ENCODE measurements at regions of chrX and their contacts with region 1.

Region 1: DNA sequence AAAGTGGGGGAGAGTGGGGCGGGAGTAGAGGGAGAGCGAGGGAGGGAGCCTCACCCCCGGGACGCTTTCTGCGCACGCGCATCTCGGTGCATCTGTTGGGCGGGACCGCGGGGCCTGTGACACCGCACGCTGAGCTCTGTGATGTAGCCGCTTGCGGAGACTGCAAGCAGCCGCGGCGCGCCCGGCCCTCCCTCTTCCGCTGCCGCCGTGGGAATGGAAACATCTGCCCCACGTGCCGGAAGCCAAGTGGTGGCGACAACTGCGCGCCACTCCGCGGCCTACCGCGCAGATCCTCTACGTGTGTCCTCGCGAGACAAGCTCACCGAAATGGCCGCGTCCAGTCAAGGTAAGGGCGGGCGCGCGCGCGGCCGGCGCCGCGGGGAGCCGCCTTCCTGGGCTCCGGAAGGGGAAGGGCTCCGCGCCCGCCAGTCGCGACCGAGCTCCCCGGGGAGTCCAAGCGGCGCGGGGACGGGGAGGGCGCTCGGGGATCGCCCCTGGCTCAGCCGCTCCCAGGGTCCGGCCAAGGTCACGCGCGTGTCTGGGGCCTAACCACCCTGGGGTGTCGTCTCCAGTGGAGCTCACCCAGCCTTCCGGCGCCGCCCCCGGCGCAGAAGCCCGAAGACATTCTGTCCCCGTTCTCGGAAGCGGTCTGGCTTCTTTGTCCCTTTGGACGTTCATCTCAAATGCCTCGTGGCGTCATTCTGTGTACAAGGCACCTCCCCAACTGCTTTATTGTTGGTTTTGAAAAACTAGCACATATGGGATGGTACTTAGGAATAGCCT is at the start of gene FUNDC2:
- DNase-seq: peak; percentile 93
- H3K4me3 Mint-ChIP-seq: peak within 1 kb of the TSS; percentile 85
- H3K27ac Mint-ChIP-seq: peak within 1 kb of the TSS; percentile 91
- H3K4me1 Mint-ChIP-seq: peaks cover 19% of the 10 kb centered on the region
- H3K27me3 Mint-ChIP-seq: peaks cover 7% of the 10 kb centered on the region
- total RNA-seq, gene FUNDC2: 70.1 and 70.7 TPM in 2 replicates

Region 2: DNA sequence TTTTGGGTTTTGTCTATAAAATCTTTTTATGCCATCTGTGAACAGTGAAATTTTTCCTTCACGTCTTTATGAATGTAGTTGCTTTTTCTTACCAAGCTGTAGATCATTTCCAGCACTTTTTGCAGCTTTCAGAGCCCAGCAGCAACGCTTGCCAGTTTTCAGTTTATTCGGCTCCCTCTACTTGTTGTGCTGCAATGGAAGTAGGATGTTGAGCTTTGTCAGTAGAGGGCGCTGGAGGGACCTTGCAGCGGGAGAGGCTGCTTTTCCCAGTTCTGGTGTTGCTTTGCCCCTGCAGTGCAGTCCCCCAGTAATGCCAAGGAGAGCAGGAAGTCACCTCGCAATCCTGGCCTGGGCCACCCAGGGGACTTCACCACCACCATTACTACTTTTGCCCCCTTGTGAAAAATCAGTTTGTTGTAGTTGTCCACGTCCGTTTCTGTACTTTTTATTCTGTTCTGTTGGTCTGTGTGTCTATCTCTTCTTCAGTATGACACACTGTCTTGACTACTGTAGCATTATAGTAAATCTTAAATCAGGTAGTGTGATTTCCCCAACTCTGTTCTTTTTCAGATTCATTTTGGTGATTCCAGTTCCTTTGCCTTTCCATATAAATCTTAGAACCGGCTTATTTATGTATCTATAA is 22.2 kb after region 1 on chrX:
- intact Hi-C with region 1: loop called (anchors 2 kb)
- DNase-seq: no peak
- H3K4me3 Mint-ChIP-seq: no peak overlapping the region
- H3K27ac Mint-ChIP-seq: no peak overlapping the region
- H3K4me1 Mint-ChIP-seq: peaks cover 21% of the 10 kb centered on the region
- H3K27me3 Mint-ChIP-seq: no peaks in the 10 kb centered on the region

Region 3: GRCh38 chrX:155056877-155057792 is 30.2 kb after region 1 on chrX:
- intact Hi-C with region 1: loop called (anchors 2 kb)
- DNase-seq: peak; percentile 32
- H3K4me3 Mint-ChIP-seq: peak overlapping the region; percentile 31
- H3K27ac Mint-ChIP-seq: peak overlapping the region; percentile 42
- H3K4me1 Mint-ChIP-seq: peaks cover 25% of the 10 kb centered on the region
- H3K27me3 Mint-ChIP-seq: no peaks in the 10 kb centered on the region

Region 4: GRCh38 chrX:155070975-155071693 is 44.2 kb after region 1 on chrX and contains the starts of genes BRCC3, CMC4 and MTCP1:
- intact Hi-C with region 1: loop called (anchors 1 kb)
- DNase-seq: peak; percentile 74
- H3K4me3 Mint-ChIP-seq: peak within 1 kb of the TSS; percentile 94
- H3K27ac Mint-ChIP-seq: peak within 1 kb of the TSS; percentile 95
- H3K4me1 Mint-ChIP-seq: peaks cover 44% of the 10 kb centered on the region
- H3K27me3 Mint-ChIP-seq: no peaks in the 10 kb centered on the region
- total RNA-seq, gene BRCC3: 29.3 and 34.9 TPM in 2 replicates
- total RNA-seq, gene CMC4: 1.9 and 4.3 TPM in 2 replicates
- total RNA-seq, gene MTCP1: 12.3 and 19.0 TPM in 2 replicates

Region 5: DNA sequence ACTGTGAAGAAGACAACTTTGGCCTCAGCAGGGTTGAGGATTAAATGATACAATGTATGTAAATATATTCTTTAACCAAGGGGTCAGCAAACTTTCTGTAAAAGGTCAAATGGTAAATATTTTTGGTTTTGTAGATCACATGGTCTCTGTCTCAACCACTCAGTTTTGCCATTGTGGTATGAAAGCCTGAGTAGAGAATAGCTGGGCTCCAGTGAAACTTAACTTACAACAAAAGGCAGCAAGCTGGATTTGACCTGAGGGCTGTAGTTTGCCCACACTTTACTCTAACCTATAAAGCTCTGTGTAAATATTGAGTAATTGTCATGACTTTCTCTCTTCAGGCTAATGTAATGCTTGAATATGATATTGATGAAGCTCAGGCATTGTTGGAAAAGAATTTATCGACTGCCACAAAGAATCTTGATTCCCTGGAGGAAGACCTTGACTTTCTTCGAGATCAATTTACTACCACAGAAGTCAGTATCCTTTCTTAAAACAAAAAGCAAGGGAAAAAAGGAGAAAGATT is 209.0 kb after region 1 on chrX:
- intact Hi-C with region 1: no loop called
- DNase-seq: no peak
- H3K4me3 Mint-ChIP-seq: no peak overlapping the region
- H3K27ac Mint-ChIP-seq: no peak overlapping the region
- H3K4me1 Mint-ChIP-seq: peaks cover 7% of the 10 kb centered on the region
- H3K27me3 Mint-ChIP-seq: no peaks in the 10 kb centered on the region

Measured in activated T-helper 2 cell treated with anti-CD3 and anti-CD28 coated beads, Interferon-gamma antibody, Interleukin-2, Interleukin-4, amounts not matched to agents 10 μg/mL and 5 μg/mL and 100 μg/mL, durations not matched to agents 14 hours and 24 hours and 36 hours (primary cell).